IMR-90 (cell line): ENCODE measurements at regions of chrX and their contacts with region 1.

Region 1: DNA sequence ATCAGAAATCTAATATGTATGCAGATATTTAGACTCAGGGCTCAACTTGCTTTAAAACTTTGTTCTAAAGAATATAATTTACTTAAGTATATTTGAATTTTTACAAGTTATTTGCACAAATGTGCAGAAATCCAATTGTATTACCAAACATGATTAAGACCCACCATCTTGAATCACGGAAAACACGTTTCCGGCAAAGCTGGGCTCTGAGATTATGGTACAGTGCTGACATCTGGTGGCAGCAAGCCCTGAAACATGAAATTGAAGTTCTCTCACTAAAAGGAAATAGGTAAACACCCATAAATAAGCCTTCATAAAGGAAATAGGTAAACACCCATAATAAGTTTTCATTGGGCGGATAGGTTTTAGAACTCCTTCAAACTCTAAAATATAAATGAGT is 98.3 kb upstream of the MAOA start:
- DNase-seq: peak; percentile 49
- ATAC-seq: peak; percentile 59; the same call in 1 of the 2 replicates
- H3K4me3 ChIP-seq: no peak overlapping the region
- H3K27ac ChIP-seq: no peak overlapping the region
- H3K4me1 ChIP-seq: no peaks in the 10 kb centered on the region
- H3K27me3 ChIP-seq: no peaks in the 10 kb centered on the region; the same call in 1 of the 2 replicates
- CTCF ChIP-seq: peak; percentile 61
- POLR2A ChIP-seq: no peak
- RAD21 ChIP-seq: peak; percentile 56

Region 2: GRCh38 chrX:41781502-41781901 is 1776.3 kb before region 1 on chrX:
- CTCF ChIA-PET with region 1: no interaction called
- POLR2A ChIA-PET with region 1: no interaction called
- dilution Hi-C with region 1: no loop called
- in situ Hi-C with region 1: loop called (anchors 10 kb)
- intact Hi-C with region 1: loop called (anchors 1 kb)
- DNase-seq: peak; percentile 56
- ATAC-seq: peak; percentile 56
- H3K4me3 ChIP-seq: no peak overlapping the region
- H3K27ac ChIP-seq: no peak overlapping the region
- H3K4me1 ChIP-seq: peaks cover 3% of the 10 kb centered on the region
- H3K27me3 ChIP-seq: no peaks in the 10 kb centered on the region
- CTCF ChIP-seq: peak; percentile 69
- POLR2A ChIP-seq: 0 out of 2 replicates have a peak, but pooled peaks have one; percentile 23
- RAD21 ChIP-seq: peak; percentile 79

Region 3: GRCh38 chrX:41923257-41923969 is 1634.4 kb before region 1 on chrX and contains the start of gene CASK:
- CTCF ChIA-PET with region 1: no interaction called
- POLR2A ChIA-PET with region 1: no interaction called
- dilution Hi-C with region 1: no loop called
- in situ Hi-C with region 1: no loop called
- intact Hi-C with region 1: loop called (anchors 5 kb)
- DNase-seq: peak; percentile 87
- ATAC-seq: peak; percentile 97
- H3K4me3 ChIP-seq: peak within 1 kb of the TSS; percentile 92
- H3K27ac ChIP-seq: peak within 1 kb of the TSS; percentile 82
- H3K4me1 ChIP-seq: no peaks in the 10 kb centered on the region
- H3K27me3 ChIP-seq: peaks cover 11% of the 10 kb centered on the region
- CTCF ChIP-seq: no peak
- POLR2A ChIP-seq: no peak
- RAD21 ChIP-seq: no peak
- total RNA-seq, gene CASK: 17.7 and 21.9 TPM in 2 replicates

Region 4: GRCh38 chrX:43654431-43655150 is 96.8 kb after region 1 on chrX:
- CTCF ChIA-PET with region 1: no interaction called
- POLR2A ChIA-PET with region 1: no interaction called
- dilution Hi-C with region 1: no loop called
- in situ Hi-C with region 1: no loop called
- intact Hi-C with region 1: loop called (anchors 2 kb)
- DNase-seq: peak; percentile 77
- ATAC-seq: peak; percentile 97
- H3K4me3 ChIP-seq: peak overlapping the region; percentile 59
- H3K27ac ChIP-seq: peak overlapping the region; percentile 98
- H3K4me1 ChIP-seq: no peaks in the 10 kb centered on the region
- H3K27me3 ChIP-seq: peaks cover 2% of the 10 kb centered on the region
- CTCF ChIP-seq: 0 out of 2 replicates have a peak, but pooled peaks have one; percentile 1
- POLR2A ChIP-seq: no peak
- RAD21 ChIP-seq: no peak

Region 5: DNA sequence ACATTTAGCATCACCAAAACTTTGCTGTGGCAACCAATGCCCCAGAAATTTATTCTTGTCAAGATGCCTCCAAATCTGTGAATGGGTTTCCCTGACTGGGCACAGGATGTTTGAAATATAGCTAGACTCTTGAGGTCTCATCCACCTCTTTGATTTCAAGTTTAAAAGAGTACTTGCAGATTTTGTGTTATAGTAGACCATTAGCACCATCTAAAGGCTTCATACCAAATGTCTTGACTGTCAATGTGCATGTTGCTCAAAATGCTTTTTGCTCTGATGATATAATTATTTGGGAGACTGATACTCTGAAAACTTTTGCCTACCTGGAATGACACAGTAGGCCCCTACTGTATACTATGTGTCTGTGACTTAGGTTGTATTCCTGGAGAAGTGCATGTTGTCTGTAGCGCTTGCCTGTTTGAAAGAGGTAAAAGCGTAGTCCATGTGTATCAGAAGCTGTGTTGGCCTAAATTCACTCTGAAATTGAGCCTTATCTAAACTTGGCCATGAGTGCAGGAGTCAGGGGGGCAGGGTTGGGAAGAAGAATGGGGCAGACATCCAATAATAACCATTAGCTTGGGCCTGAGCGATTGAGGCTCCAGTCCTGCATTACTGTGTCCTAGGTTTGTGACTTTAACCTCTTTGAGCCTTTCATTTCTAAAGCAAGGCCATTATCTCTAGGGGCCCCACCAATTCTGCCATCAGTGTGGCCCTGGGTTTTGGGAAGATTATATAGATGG is 381.6 kb after region 1 on chrX:
- CTCF ChIA-PET with region 1: no interaction called
- POLR2A ChIA-PET with region 1: no interaction called
- dilution Hi-C with region 1: no loop called
- in situ Hi-C with region 1: no loop called
- intact Hi-C with region 1: loop called (anchors 10 kb)
- DNase-seq: peak; percentile 3
- ATAC-seq: no peak
- H3K4me3 ChIP-seq: no peak overlapping the region
- H3K27ac ChIP-seq: no peak overlapping the region
- H3K4me1 ChIP-seq: no peaks in the 10 kb centered on the region
- H3K27me3 ChIP-seq: peaks cover 3% of the 10 kb centered on the region
- CTCF ChIP-seq: no peak
- POLR2A ChIP-seq: no peak
- RAD21 ChIP-seq: no peak